WTC11 (cell line): ENCODE measurements at regions of chr17 and their contacts with region 1.

Region 1: DNA sequence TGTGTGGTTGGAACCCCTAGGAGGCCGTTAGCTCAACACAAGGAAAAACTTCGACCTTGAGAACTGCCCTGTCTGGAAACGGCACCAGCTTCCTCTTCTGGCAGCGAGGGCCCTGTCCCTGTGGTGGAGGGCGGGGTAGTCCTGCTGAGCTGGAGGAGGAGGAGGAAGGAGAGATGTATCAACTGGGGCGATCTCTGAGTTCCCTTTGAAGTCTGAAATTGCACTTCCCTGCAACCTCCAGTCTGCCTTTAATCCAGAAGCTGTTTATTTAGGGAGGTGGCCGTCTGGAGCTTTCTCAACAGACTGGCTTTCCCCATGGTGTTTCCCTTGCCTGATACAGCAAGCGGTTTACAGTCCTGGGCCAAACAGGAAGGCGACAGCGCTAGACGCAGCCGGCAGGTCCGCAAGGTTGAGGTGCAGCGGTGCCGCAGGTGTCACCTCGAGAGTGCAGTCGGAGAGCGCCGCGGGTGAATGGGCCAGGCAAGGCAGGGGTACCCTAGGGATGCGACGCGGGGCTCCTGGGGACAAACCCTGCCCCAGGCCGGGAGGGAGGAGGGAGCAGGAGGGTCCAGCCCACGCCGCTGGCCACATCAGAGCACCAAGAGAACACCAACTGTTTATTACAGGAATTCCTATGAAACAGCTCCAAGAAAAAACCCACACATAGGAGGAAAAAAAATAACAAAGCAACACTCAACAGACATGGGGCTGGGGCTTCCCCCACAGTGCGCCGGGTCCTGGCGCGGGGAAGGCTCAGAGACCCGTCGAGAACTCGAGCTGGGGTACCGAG is 11.4 kb upstream of the MRPS23 start:
- DNase-seq: peak; percentile 58
- ATAC-seq: peak; percentile 34
- H3K4me3 Mint-ChIP-seq: peak overlapping the region; percentile 79
- H3K27ac Mint-ChIP-seq: no peak overlapping the region
- H3K4me1 Mint-ChIP-seq: peaks cover 55% of the 10 kb centered on the region
- H3K27me3 Mint-ChIP-seq: peaks cover 40% of the 10 kb centered on the region
- CTCF ChIP-seq: no peak

Region 2: GRCh38 chr17:57875309-57876115 is 14.3 kb after region 1 on chr17:
- CTCF ChIA-PET with region 1: interaction called, 39 read pairs
- POLR2A ChIA-PET with region 1: interaction called, 21 read pairs
- DNase-seq: peak; percentile 69
- ATAC-seq: peak; percentile 63
- H3K4me3 Mint-ChIP-seq: peak overlapping the region; percentile 46
- H3K27ac Mint-ChIP-seq: peak overlapping the region; percentile 87
- H3K4me1 Mint-ChIP-seq: peaks cover 82% of the 10 kb centered on the region
- H3K27me3 Mint-ChIP-seq: peaks cover 10% of the 10 kb centered on the region; the same call in 1 of the 2 replicates
- CTCF ChIP-seq: no peak

Region 3: GRCh38 chr17:57902800-57903759 is 41.9 kb after region 1 on chr17:
- CTCF ChIA-PET with region 1: interaction called, 18 read pairs
- POLR2A ChIA-PET with region 1: interaction called, 3 read pairs
- DNase-seq: no peak
- ATAC-seq: no peak
- H3K4me3 Mint-ChIP-seq: no peak overlapping the region
- H3K27ac Mint-ChIP-seq: peak overlapping the region; percentile 71; the same call in 1 of the 2 replicates
- H3K4me1 Mint-ChIP-seq: peaks cover 59% of the 10 kb centered on the region
- H3K27me3 Mint-ChIP-seq: no peaks in the 10 kb centered on the region
- CTCF ChIP-seq: no peak

Region 4: DNA sequence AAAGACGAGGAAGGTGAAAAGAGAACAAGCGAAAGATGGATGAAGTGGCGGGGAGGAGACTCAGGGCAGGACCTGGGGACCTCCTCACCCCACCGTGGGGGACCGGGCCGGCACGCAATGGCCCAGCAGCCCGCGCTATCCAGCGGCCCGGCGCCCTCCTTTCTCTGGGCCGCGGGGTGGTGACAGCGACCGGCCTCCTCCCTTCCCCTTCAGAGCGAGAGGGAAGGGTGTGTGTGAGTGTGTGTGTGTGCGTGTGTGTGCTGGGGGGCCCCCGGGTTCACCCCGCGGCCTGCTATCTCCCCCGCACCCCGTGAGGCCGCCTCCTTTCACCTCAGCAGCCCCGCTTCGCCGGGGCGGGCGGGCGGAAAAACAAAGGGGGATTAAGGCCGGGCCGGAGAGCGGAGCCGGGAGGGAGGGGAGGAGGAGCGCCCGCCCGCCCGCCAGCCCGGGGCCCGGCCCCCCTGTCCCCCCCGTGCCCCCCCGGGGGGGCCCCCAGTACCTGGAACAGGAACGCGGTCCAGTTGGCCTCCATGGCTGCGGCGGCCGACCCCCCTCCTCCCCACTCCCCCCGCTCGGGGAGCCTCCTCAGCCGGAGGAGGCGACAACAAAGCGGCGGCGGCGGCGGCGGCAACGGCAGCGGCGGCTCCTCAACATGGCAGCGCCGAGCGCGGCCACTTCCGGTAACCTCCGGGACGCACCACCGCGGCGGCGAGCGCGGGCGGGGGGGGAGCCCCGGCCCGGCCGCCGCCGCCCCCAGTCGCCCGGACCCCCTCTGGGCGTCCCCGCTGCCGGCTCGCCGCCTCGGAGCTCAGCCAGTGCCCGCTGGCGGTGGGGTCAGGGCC is 126.6 kb after region 1 on chr17 and contains the start of gene VEZF1:
- CTCF ChIA-PET with region 1: interaction called, 207 read pairs
- POLR2A ChIA-PET with region 1: interaction called, 5 read pairs
- DNase-seq: peak; percentile 76
- ATAC-seq: peak; percentile 57
- H3K4me3 Mint-ChIP-seq: peak within 1 kb of the TSS; percentile 90
- H3K27ac Mint-ChIP-seq: peak within 1 kb of the TSS; percentile 96
- H3K4me1 Mint-ChIP-seq: peaks cover 74% of the 10 kb centered on the region
- H3K27me3 Mint-ChIP-seq: no peaks in the 10 kb centered on the region
- CTCF ChIP-seq: no peak
- total RNA-seq, gene VEZF1: 43.1 to 43.8 TPM (median 43.3 TPM) in 3 replicates

Region 5: GRCh38 chr17:58006924-58007780 is 146.0 kb after region 1 on chr17 and contains the start of gene SRSF1:
- CTCF ChIA-PET with region 1: interaction called, 207 read pairs
- POLR2A ChIA-PET with region 1: interaction called, 9 read pairs
- DNase-seq: peak; percentile 96
- ATAC-seq: peak; percentile 91
- H3K4me3 Mint-ChIP-seq: peak within 1 kb of the TSS; percentile 100
- H3K27ac Mint-ChIP-seq: peak within 1 kb of the TSS; percentile 100
- H3K4me1 Mint-ChIP-seq: peaks cover 47% of the 10 kb centered on the region
- H3K27me3 Mint-ChIP-seq: no peaks in the 10 kb centered on the region
- CTCF ChIP-seq: no peak
- total RNA-seq, gene SRSF1: 349 to 387 TPM (median 366 TPM) in 3 replicates

Region 6: GRCh38 chr17:58020401-58020800 is 159.2 kb after region 1 on chr17:
- CTCF ChIA-PET with region 1: no interaction called
- POLR2A ChIA-PET with region 1: no interaction called
- DNase-seq: no peak
- ATAC-seq: no peak
- H3K4me3 Mint-ChIP-seq: no peak overlapping the region
- H3K27ac Mint-ChIP-seq: no peak overlapping the region
- H3K4me1 Mint-ChIP-seq: peaks cover 11% of the 10 kb centered on the region
- H3K27me3 Mint-ChIP-seq: peaks cover 3% of the 10 kb centered on the region; the same call in 1 of the 2 replicates
- CTCF ChIP-seq: no peak